PC-3 (cell line): ENCODE measurements at regions of chr3 and their contacts with region 1.

Region 1: GRCh38 chr3:4741404-4742307 is 237.6 kb upstream of the BHLHE40 start:
- DNase-seq: peak; percentile 98
- ATAC-seq: peak; percentile 64
- H3K4me3 ChIP-seq: no peak overlapping the region
- H3K27ac ChIP-seq: peak overlapping the region; percentile 97
- H3K4me1 ChIP-seq: peaks cover 53% of the 10 kb centered on the region
- H3K27me3 ChIP-seq: no peaks in the 10 kb centered on the region
- CTCF ChIP-seq: no peak

Region 2: GRCh38 chr3:4776980-4777581 is 35.4 kb after region 1 on chr3:
- CTCF ChIA-PET with region 1: no interaction called
- POLR2A ChIA-PET with region 1: no interaction called
- intact Hi-C with region 1: loop called (anchors 2 kb)
- DNase-seq: peak; percentile 24
- ATAC-seq: peak; percentile 69
- H3K4me3 ChIP-seq: no peak overlapping the region
- H3K27ac ChIP-seq: peak overlapping the region; percentile 22
- H3K4me1 ChIP-seq: peaks cover 21% of the 10 kb centered on the region
- H3K27me3 ChIP-seq: no peaks in the 10 kb centered on the region
- CTCF ChIP-seq: no peak